Mucosa of descending colon (tissue), 3 donors: ENCODE measurements at regions of chr10 and their contacts with region 1.

Region 1: GRCh38 chr10:123582084-123582989 is 83.8 kb upstream of the GPR26 start:
- DNase-seq: peak in 2 of 3 donors; percentile 84 to 85
- ATAC-seq: peak; percentile 77
- H3K4me3 ChIP-seq: no peak overlapping the region
- H3K4me1 ChIP-seq: no peaks in the 10 kb centered on the region
- CTCF ChIP-seq: peak; percentile 81

Region 2: GRCh38 chr10:122243550-122243949 is 1338.8 kb before region 1 on chr10:
- intact Hi-C with region 1: no loop called
- DNase-seq: no peak
- ATAC-seq: no peak
- H3K4me3 ChIP-seq: no peak overlapping the region
- H3K4me1 ChIP-seq: no peaks in the 10 kb centered on the region
- CTCF ChIP-seq: no peak

Region 3: GRCh38 chr10:123967396-123968243 is 385.3 kb after region 1 on chr10:
- intact Hi-C with region 1: loop called (anchors 2 kb)
- DNase-seq: peak in 2 of 3 donors; percentile 79 to 81
- ATAC-seq: peak; percentile 82
- H3K4me3 ChIP-seq: no peak overlapping the region
- H3K4me1 ChIP-seq: no peaks in the 10 kb centered on the region
- CTCF ChIP-seq: peak; percentile 59

Region 4: DNA sequence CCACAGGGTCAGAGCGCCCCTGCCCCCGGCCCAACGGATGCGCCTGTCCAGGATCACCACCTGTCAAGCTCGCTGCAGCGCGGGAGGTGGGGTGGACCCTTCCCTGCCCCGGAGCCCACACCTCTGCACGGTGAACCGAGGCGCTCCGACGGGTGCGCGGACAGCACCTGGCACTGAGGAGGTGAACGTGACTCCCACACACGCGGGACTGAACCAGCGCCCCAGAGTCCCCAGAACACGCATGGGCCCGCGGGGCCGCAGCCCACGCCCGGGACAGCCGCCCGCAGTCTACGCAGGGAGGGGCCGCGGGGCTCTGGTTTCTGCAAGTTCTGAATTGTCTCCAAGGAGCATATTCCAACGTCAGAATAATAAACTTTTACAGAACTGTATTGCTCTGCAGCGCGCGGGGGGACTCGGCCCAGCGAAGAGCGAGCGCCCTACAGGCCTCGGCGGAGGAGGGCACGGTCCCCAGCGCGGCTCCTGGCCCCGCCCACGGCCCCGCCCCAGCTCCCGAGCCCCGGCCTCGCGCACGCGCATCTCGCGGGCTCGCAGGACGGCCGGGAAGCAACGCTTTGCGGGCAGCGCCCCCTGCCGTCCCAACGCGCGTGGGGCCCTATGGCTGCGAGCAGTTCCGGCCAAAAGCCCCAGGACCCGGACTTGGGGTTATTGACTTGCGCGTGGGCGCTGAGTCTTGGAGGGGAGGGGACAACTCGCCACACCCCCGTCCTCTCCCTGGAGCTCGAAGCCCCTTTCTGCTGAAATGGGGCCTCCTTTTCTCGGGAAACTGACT is 806.7 kb after region 1 on chr10:
- intact Hi-C with region 1: loop called in 1 of 2 experiments (anchors 10 kb)
- DNase-seq: peak; percentile 92 to 96 (median 94)
- ATAC-seq: peak; percentile 100
- H3K4me3 ChIP-seq: peak overlapping the region; percentile 11
- H3K4me1 ChIP-seq: peaks cover 6% of the 10 kb centered on the region
- CTCF ChIP-seq: peak; percentile 93